ENCODE measurements at regions of chr4 and their contacts with region 1.

Region 1: GRCh38 chr4:76430519-76431388 is 4.3 kb upstream of the SHROOM3 start:
- DNase-seq: peak; percentile 67
- H3K4me3 ChIP-seq: peak overlapping the region in 1 of 2 experiments; percentile 40; a peak in 1 of 4 replicates
- H3K27ac ChIP-seq: no peak overlapping the region
- H3K4me1 ChIP-seq: no peaks in the 10 kb centered on the region
- H3K27me3 ChIP-seq: no peaks in the 10 kb centered on the region
- CTCF ChIP-seq: peak; percentile 94
- EP300 ChIP-seq: no peak
- RAD21 ChIP-seq: peak; percentile 83

Region 2: DNA sequence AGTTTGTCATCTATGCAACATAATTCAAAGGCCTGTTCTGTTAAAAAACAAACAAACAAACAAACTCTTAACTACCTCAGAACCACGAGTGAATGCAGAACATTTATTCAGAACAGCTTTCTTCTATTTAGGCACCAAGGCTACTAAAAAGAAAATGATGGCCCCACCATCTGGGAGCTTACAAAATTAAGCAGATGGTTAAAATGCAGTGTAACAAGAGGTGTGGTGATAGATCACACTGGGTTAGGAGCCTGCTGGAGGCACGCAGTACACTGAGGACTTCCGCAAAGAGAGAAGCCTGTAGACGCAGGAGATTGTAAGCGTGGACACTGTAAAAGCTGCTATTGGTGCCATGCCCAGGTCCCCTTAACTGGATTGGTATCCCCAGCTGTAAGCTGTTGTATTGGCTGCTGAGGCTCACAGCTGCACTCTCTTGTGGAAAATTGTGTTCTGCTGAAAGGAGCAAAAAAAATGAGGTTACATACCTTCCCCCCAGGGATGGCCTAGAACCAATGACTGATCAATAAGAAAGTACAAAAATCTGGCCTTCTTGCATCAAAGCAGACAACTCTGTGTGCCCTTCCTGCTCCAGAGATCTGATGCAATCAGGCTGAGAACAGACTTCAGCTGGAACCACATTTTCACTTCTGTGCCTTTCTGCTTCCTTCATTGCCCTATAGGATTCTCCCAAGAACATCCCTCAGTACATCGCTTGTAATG is 64.3 kb after region 1 on chr4:
- CTCF ChIA-PET with region 1: interaction called, 192 read pairs
- POLR2A ChIA-PET with region 1: no interaction called
- DNase-seq: no peak
- H3K4me3 ChIP-seq: no peak overlapping the region
- H3K27ac ChIP-seq: no peak overlapping the region
- H3K4me1 ChIP-seq: no peaks in the 10 kb centered on the region; a peak in 1 of 4 replicates
- H3K27me3 ChIP-seq: peaks cover 5% of the 10 kb centered on the region; the same call in 1 of the 2 replicates
- CTCF ChIP-seq: no peak
- EP300 ChIP-seq: no peak
- RAD21 ChIP-seq: no peak

Measured in SK-N-SH (cell line).